SK-N-SH (cell line): ENCODE measurements at regions of chr11 and their contacts with region 1.

Region 1: GRCh38 chr11:131674051-131674755 is 303.8 kb downstream of the NTM start:
- DNase-seq: peak; percentile 80
- H3K4me3 ChIP-seq: peak overlapping the region in 1 of 2 experiments; percentile 44; a peak in 1 of 4 replicates
- H3K27ac ChIP-seq: no peak overlapping the region
- H3K4me1 ChIP-seq: no peaks in the 10 kb centered on the region
- H3K27me3 ChIP-seq: no peaks in the 10 kb centered on the region; the same call in 1 of the 2 replicates
- CTCF ChIP-seq: peak; percentile 92
- EP300 ChIP-seq: no peak
- RAD21 ChIP-seq: peak; percentile 98

Region 2: DNA sequence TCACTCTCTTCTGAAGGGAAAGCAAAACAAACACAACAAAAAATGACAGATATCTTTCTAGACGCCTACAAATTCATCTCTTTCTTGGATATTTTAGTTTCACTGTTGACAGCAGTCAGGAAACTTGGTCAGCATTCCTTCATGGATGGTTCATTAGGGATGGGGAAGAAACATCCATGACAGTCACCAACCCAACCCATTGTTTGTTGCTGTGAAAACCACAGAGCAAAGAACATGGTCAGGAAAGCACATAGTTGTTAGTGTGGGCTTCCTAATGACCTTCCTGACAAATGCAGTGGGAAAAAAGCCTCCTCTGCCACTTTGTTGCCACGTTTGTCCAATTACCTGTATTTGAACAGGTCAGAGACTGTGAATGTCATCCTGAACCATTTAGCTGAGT is 618.2 kb before region 1 on chr11:
- CTCF ChIA-PET with region 1: interaction called, 87 read pairs
- POLR2A ChIA-PET with region 1: no interaction called
- DNase-seq: no peak
- H3K4me3 ChIP-seq: no peak overlapping the region
- H3K27ac ChIP-seq: no peak overlapping the region
- H3K4me1 ChIP-seq: no peaks in the 10 kb centered on the region; a peak in 1 of 4 replicates
- H3K27me3 ChIP-seq: no peaks in the 10 kb centered on the region
- CTCF ChIP-seq: no peak
- EP300 ChIP-seq: no peak
- RAD21 ChIP-seq: no peak

Region 3: DNA sequence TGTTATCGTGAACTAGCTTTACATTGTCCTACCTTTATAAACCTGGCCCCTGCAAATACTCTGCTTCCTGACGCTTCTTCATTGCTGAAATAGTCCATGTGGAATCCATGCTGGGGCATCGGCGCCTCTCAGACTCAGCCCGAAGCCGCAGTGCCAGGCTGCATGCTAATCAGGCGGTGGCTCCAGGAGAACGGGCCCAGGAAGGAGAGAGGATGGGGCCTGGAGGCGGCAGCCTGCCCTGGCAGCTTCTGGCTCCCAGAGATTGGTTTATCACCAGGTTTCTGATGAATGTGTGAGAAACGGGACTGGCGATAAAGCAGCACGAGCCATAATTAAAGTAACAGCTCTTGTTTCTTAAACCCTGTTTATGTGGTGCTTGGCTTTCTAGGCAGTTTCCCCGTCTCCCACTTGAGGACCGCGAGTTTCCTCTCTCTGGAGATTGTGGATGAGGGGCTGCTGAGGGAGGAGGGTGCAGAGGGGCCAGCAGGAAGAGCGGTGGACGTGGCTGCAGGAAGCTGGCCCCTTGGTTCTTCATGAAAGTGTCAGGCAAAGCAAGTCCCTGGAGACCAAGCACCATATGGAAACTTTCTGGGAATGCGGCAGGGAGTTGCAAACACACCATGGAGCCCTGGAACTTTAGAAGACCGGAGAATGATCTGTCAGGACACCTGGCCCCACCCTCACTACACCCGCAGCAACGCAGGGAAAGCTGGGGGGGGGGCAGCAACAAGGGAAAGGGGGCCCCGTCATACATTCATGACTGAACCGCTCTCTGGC is 210.4 kb before region 1 on chr11:
- CTCF ChIA-PET with region 1: interaction called, 10 read pairs
- POLR2A ChIA-PET with region 1: no interaction called
- DNase-seq: no peak
- H3K4me3 ChIP-seq: no peak overlapping the region
- H3K27ac ChIP-seq: no peak overlapping the region
- H3K4me1 ChIP-seq: no peaks in the 10 kb centered on the region
- H3K27me3 ChIP-seq: no peaks in the 10 kb centered on the region
- CTCF ChIP-seq: no peak
- EP300 ChIP-seq: no peak
- RAD21 ChIP-seq: no peak

Region 4: DNA sequence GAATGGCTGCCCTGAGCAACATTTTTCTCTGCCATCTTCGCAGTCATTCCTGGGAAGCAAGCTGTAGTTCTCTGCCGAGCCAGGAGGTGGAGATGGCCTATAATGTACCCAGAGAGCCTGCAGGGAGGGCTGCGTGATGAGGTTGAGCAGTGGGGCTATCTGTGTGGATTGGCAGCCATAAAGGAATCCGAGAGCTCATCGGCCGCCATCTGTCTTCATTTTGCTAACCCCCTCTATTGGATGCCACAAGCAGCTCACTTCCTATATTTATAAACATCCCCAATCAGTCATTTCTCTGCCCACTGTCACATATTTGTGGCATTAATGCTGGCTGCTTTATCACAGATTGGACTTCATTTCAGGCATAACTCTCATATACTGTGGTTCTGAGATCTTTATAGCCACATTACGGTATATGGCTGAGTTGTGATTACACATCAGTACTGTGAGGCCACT is 94.2 kb before region 1 on chr11:
- CTCF ChIA-PET with region 1: interaction called, 54 read pairs
- POLR2A ChIA-PET with region 1: no interaction called
- DNase-seq: peak; percentile 61
- H3K4me3 ChIP-seq: no peak overlapping the region
- H3K27ac ChIP-seq: no peak overlapping the region
- H3K4me1 ChIP-seq: no peaks in the 10 kb centered on the region
- H3K27me3 ChIP-seq: no peaks in the 10 kb centered on the region
- CTCF ChIP-seq: 0 out of 2 replicates have a peak, but pooled peaks have one; percentile 15
- EP300 ChIP-seq: no peak
- RAD21 ChIP-seq: peak; percentile 55

Region 5: DNA sequence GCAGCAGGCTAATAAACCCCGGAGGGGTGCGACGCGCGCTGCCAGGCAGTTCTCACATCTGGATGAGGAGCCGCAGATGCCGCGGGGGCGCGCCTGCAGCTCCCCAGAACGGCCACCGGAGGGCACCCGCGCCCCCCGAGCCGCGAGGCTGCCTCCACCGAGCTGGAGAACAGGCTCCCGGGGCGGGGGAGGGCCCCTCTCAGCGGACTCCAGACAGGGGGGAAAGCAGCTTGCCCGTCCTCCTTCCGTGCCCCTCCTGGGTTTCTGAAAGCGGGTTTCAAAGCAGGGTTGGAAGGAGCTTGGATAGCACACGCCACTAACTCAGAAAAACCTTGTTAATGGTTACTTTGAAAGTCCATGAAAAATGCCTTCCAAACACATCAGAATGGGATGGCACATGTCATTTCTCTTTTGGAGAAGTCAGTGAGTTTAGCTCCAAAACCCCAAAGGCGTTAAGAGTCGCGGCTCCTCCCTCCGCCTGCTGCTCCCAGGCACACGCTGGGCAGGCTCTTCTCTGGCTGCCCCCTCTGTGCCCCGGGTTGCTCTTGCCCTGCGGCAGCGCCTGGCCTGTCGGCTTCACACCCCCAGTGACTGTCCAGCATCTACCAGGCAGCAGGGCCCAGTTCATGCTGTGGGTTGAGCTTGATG is 14.0 kb after region 1 on chr11:
- CTCF ChIA-PET with region 1: interaction called, 49 read pairs
- POLR2A ChIA-PET with region 1: no interaction called
- DNase-seq: peak; percentile 96
- H3K4me3 ChIP-seq: peak overlapping the region; percentile 4 to 48; a peak in 2 of 4 replicates
- H3K27ac ChIP-seq: no peak overlapping the region
- H3K4me1 ChIP-seq: peaks cover 0 to 12% of the 10 kb centered on the region in 2 experiments; a peak in 2 of 4 replicates
- H3K27me3 ChIP-seq: peaks cover 5% of the 10 kb centered on the region; the same call in 1 of the 2 replicates
- CTCF ChIP-seq: peak; percentile 88
- EP300 ChIP-seq: no peak
- RAD21 ChIP-seq: peak; percentile 66